Posterior cingulate gyrus (tissue), 11 donors: ENCODE measurements at regions of chr9 and their contacts with region 1.

Region 1: DNA sequence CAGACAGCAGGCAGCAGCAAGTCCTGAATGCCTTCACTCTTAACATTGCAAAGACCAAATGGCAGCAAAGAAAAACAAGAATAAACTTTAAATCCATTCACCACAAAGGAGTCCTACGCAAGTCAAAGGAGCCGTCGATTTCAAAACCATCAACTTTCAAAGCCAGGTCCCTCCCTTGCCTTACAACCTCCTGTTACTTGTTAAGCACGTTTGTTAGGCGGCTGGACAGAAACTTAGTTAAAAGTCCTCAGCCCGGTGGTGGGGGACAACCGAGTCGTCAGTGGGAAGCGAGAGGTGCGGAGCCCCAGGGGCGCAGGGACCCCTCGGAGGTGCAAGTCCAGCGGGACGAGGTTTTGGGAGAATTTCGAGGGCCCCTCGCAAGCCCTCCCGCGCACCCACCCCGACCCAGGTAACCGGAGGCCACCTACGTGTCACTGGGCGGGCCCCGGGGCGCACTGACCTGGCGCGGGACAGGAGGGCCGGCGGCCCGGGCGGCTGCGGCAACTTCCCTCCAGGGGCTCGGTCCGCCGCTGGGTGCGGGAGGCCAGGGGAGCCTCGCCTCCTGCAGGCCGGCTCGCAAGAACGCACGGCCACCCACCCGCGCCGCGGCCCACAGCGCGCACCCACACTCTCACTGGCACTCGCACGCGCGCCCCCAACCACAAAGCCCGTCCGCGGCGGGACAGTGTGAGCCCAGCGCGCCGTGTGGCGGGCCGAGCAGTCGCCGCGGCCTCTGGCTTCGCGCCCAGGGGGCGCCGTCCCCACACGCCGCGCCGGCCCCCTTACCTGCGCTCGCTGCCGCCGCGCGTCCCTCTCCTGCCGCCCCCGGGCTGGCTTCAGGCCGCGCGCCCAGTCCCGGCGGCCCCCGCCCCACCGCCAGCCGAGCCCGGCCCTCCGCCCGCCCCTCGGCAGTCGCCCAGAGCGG is 627 bp downstream of the LPAR1 start:
- DNase-seq: peak in 7 of 10 donors; percentile 8 to 88 (median 57)

Region 2: GRCh38 chr9:110648696-110649095 is 388.9 kb before region 1 on chr9:
- intact Hi-C with region 1: loop called (anchors 5 kb)
- DNase-seq: peak in 1 of 10 donors; percentile 34

Region 3: DNA sequence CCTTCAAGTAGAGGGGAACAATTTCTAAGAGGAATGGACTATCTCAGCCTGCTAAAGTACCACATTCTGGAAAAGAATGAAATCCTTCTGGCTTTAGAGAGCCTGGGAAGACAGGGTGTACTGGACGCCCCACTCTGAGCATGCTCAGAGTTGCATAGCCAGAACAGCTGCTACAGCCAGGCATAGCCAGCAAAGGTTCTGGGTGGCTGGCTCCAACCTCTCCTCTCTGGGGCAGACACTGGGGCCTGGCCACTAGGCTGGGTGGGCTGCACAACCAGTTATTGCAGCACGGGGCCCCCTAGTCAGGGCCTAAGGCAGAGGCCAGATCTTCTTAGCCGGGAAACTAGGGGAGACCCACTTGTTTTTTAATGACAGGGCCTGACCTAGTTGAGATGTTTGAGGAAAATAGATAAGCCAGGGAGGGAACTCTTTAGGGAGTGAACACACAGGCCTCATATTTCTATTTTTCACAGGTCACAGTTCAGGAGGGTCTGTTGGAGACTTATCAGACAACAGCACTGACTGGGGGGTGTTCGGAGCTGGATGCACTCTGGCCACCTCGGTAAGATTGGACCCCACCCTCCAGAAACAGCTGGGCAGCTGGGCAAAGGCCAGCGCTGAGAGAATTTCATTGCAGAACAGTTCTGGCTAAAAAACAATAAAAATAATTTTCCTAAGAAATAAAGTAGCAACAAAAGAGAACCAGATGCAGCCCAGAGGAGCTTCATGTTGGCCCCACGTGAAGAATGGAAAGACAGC is 142.3 kb before region 1 on chr9:
- intact Hi-C with region 1: loop called (anchors 10 kb)
- DNase-seq: peak in 3 of 10 donors; percentile 22 to 62 (median 40)